ENCODE measurements at regions of chr10 and their contacts with region 1.

Region 1: GRCh38 chr10:102503281-102504220 is at the start of gene SUFU:
- DNase-seq: peak; percentile 98
- H3K4me3 ChIP-seq: peak within 1 kb of the TSS; percentile 95
- CTCF ChIP-seq: peak; percentile 91

Region 2: GRCh38 chr10:102579328-102579727 is 75.8 kb after region 1 on chr10:
- in situ Hi-C with region 1: loop called (anchors 10 kb)
- DNase-seq: peak; percentile 27
- H3K4me3 ChIP-seq: no peak overlapping the region
- CTCF ChIP-seq: no peak

Region 3: DNA sequence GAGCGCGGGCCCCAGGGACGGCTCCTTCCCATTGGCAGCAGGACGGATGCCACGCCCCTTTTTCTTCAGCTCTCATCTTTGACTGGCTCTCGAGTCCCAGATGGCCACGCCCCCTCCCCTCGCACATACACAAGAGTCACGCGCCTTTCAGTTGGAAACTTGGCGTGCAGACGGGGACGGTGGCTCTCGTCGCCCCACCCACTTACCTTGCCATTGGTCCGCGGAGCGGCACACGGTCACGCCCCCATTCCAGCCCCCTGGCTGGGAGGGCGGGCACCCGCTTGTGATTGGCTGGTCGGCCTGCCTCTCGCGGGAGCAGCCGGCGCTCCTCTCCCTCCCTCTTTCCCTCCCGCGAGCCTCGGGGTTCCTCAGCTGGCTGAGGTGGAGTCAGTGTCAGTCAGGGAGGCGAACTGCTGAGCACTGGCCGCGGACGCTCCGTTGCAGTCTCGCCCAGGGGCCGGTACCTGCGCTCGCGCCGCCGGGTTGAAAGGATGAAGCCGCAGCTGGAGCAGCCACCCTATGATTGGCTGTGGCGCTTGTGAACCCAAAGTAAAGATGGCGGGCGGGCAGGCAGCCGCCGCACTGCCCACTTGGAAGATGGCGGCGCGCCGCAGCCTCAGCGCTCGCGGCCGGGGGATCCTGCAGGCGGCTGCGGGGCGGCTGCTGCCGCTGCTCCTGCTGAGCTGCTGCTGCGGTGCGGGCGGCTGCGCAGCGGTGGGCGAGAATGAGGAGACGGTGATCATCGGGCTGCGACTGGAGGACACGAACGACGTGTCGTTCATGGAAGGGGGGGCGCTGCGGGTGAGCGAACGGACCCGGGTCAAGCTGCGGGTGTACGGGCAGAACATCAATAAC is 414.6 kb after region 1 on chr10 and contains the start of gene CNNM2:
- in situ Hi-C with region 1: no loop called
- DNase-seq: peak; percentile 100
- H3K4me3 ChIP-seq: peak within 1 kb of the TSS; percentile 87
- CTCF ChIP-seq: no peak

Measured in astrocyte of the spinal cord (primary cell).